Activated B cell treated with CpG ODN at 0.5 μM for 24 hours (primary cell): ENCODE measurements at regions of chr1 and their contacts with region 1.

Region 1: GRCh38 chr1:36385410-36386257 is at the start of gene STK40:
- DNase-seq: peak; percentile 88
- ATAC-seq: peak; percentile 83
- H3K4me3 Mint-ChIP-seq: peak within 1 kb of the TSS; percentile 91
- H3K27ac Mint-ChIP-seq: peak within 1 kb of the TSS; percentile 100
- H3K4me1 Mint-ChIP-seq: peaks cover 88% of the 10 kb centered on the region
- H3K27me3 Mint-ChIP-seq: no peaks in the 10 kb centered on the region
- CTCF ChIP-seq: no peak
- total RNA-seq, gene STK40: 62.7 and 63.7 TPM in 2 replicates

Region 2: GRCh38 chr1:36088575-36089443 is 296.8 kb before region 1 on chr1 and contains the start of gene ADPRS:
- CTCF ChIA-PET with region 1: no interaction called
- POLR2A ChIA-PET with region 1: no interaction called
- intact Hi-C with region 1: loop called (anchors 1 kb)
- DNase-seq: peak; percentile 90
- ATAC-seq: peak; percentile 85
- H3K4me3 Mint-ChIP-seq: peak within 1 kb of the TSS; percentile 89
- H3K27ac Mint-ChIP-seq: peak within 1 kb of the TSS; percentile 88
- H3K4me1 Mint-ChIP-seq: peaks cover 17% of the 10 kb centered on the region
- H3K27me3 Mint-ChIP-seq: peaks cover 18% of the 10 kb centered on the region
- CTCF ChIP-seq: no peak
- total RNA-seq, gene ADPRS: 23.0 and 23.9 TPM in 2 replicates

Region 3: GRCh38 chr1:36223993-36224536 is 161.6 kb before region 1 on chr1 and contains the start of gene THRAP3:
- CTCF ChIA-PET with region 1: interaction called, 4 read pairs
- POLR2A ChIA-PET with region 1: interaction called, 5 read pairs
- intact Hi-C with region 1: loop called (anchors 1 kb)
- DNase-seq: peak; percentile 98
- ATAC-seq: peak; percentile 89
- H3K4me3 Mint-ChIP-seq: peak within 1 kb of the TSS; percentile 99
- H3K27ac Mint-ChIP-seq: peak within 1 kb of the TSS; percentile 100
- H3K4me1 Mint-ChIP-seq: peaks cover 36% of the 10 kb centered on the region
- H3K27me3 Mint-ChIP-seq: no peaks in the 10 kb centered on the region
- CTCF ChIP-seq: no peak
- total RNA-seq, gene THRAP3: 142 and 145 TPM in 2 replicates

Region 4: GRCh38 chr1:36248250-36248894 is 137.3 kb before region 1 on chr1:
- CTCF ChIA-PET with region 1: no interaction called
- POLR2A ChIA-PET with region 1: no interaction called
- intact Hi-C with region 1: no loop called
- DNase-seq: no peak
- ATAC-seq: no peak
- H3K4me3 Mint-ChIP-seq: no peak overlapping the region
- H3K27ac Mint-ChIP-seq: peak overlapping the region; percentile 24
- H3K4me1 Mint-ChIP-seq: peaks cover 60% of the 10 kb centered on the region
- H3K27me3 Mint-ChIP-seq: no peaks in the 10 kb centered on the region
- CTCF ChIP-seq: no peak

Region 5: GRCh38 chr1:36411674-36412520 is 26.3 kb after region 1 on chr1:
- CTCF ChIA-PET with region 1: no interaction called
- POLR2A ChIA-PET with region 1: interaction called, 26 read pairs
- intact Hi-C with region 1: no loop called
- DNase-seq: no peak
- ATAC-seq: peak; percentile 89
- H3K4me3 Mint-ChIP-seq: no peak overlapping the region
- H3K27ac Mint-ChIP-seq: no peak overlapping the region
- H3K4me1 Mint-ChIP-seq: peaks cover 24% of the 10 kb centered on the region
- H3K27me3 Mint-ChIP-seq: no peaks in the 10 kb centered on the region
- CTCF ChIP-seq: no peak

Region 6: DNA sequence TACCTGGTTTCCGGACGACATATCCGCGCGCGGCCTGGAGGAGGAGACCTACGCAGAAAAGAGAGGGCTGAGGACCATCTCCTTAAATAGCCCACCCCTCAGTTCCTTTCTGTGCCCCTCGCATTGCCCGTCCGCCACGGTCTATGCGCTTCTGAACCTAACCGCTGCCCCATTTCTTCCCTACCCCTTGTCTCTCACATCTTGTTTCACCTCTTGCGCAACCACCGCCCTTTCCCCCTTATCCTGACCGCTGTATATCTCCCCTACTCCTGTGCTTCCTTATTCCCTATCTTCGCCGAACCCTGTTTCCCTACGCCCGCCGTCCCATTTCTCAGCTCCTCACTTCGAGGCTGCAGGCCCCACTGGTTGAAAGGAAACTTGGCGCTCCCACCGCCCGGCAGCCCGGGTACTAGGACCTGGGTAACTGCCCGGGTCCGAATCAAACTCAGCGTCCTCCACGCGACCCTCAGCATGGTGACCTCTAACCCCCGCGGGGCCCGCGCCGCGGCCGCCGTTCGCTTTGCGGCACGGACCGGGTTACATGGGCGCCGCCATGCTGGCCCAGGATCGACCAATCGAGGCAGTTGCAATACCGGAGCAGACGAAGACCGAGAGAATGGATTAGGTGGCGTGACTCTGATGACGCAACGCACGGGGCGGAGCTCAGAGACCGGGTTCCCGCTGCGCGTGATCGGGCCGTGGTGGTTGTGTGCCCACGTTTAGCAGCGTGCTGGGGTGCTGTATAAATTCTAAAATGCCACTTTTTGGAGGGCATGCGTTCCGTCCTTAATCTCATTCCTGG is 78.4 kb after region 1 on chr1 and contains the start of gene MRPS15:
- CTCF ChIA-PET with region 1: no interaction called
- POLR2A ChIA-PET with region 1: interaction called, 17 read pairs
- intact Hi-C with region 1: no loop called
- DNase-seq: peak; percentile 90
- ATAC-seq: peak; percentile 95
- H3K4me3 Mint-ChIP-seq: peak within 1 kb of the TSS; percentile 96
- H3K27ac Mint-ChIP-seq: peak within 1 kb of the TSS; percentile 98
- H3K4me1 Mint-ChIP-seq: peaks cover 27% of the 10 kb centered on the region
- H3K27me3 Mint-ChIP-seq: no peaks in the 10 kb centered on the region
- CTCF ChIP-seq: no peak
- total RNA-seq, gene MRPS15: 63.5 and 67.0 TPM in 2 replicates

Region 7: GRCh38 chr1:36511804-36512798 is 126.5 kb after region 1 on chr1:
- CTCF ChIA-PET with region 1: no interaction called
- POLR2A ChIA-PET with region 1: no interaction called
- intact Hi-C with region 1: no loop called
- DNase-seq: no peak
- ATAC-seq: no peak
- H3K4me3 Mint-ChIP-seq: no peak overlapping the region
- H3K27ac Mint-ChIP-seq: no peak overlapping the region
- H3K4me1 Mint-ChIP-seq: no peaks in the 10 kb centered on the region
- H3K27me3 Mint-ChIP-seq: peaks cover 6% of the 10 kb centered on the region
- CTCF ChIP-seq: no peak

Region 8: DNA sequence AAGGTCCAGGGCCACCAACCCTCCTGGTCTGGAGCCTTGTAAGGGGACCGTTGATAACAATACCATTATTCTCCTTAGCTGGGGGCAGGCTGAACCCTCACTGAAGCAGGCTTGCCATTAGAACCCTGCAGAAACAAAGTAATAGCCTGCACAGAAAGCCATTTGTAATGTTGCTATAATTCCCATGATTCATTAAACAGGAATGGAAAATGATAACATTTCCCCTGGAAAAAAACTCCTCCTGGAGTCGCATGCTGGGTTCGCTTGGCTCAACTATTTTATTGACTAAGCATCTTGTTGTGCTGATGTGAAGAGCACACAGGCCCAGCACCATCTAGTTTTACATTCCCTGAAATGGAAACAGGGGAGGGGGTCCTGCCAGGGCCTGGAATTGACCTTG is 252.6 kb after region 1 on chr1:
- CTCF ChIA-PET with region 1: no interaction called
- POLR2A ChIA-PET with region 1: no interaction called
- intact Hi-C with region 1: no loop called
- DNase-seq: no peak
- ATAC-seq: no peak
- H3K4me3 Mint-ChIP-seq: no peak overlapping the region
- H3K27ac Mint-ChIP-seq: no peak overlapping the region
- H3K4me1 Mint-ChIP-seq: no peaks in the 10 kb centered on the region
- H3K27me3 Mint-ChIP-seq: peaks cover 13% of the 10 kb centered on the region
- CTCF ChIP-seq: no peak